Posterior cingulate gyrus (tissue), 11 donors: ENCODE measurements at regions of chr18 and their contacts with region 1.

Region 1: DNA sequence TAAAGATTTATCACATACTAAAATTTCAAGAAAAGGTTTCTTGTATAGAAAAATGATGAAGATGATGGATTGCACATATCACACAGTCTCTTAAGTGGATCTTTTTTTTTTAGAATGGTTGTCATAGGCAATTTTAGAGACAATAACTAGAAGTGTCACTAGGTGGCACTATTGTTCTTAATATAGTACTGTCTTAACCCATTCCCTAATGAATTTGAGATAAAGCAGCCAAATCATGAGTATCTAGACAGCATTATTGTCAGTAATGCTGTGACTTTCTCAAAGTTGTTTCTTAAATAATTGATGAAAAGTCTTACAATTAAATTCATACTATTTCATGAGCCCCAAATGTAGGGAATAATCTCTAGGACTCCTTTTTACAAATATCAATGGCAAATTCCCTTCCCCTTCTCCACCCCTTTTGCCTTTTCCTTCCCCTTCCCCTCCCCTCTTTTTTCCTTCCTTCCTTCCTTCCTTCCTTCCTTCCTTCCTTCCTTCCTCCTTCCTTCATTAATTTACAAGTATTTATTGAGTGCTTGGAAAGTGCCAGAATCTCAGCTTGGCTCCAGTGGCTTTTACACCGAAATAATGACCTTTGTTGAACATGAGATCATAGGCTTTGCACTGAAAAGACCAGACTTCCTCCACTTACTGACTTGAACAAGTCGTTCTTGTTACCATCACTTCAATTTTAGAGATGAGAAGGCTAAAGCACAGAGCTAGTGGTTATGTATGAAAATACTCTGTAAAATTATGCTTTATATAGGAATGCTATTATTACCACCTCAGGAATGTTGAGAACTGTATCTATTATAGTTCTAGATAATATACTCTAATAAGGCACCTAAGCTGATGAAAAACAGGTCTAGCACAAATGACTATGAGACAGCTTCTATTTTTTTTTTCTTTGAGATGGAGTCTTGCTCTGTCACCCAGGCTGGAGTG is 19.8 kb downstream of the MYL12B start:
- DNase-seq: no peak

Region 2: DNA sequence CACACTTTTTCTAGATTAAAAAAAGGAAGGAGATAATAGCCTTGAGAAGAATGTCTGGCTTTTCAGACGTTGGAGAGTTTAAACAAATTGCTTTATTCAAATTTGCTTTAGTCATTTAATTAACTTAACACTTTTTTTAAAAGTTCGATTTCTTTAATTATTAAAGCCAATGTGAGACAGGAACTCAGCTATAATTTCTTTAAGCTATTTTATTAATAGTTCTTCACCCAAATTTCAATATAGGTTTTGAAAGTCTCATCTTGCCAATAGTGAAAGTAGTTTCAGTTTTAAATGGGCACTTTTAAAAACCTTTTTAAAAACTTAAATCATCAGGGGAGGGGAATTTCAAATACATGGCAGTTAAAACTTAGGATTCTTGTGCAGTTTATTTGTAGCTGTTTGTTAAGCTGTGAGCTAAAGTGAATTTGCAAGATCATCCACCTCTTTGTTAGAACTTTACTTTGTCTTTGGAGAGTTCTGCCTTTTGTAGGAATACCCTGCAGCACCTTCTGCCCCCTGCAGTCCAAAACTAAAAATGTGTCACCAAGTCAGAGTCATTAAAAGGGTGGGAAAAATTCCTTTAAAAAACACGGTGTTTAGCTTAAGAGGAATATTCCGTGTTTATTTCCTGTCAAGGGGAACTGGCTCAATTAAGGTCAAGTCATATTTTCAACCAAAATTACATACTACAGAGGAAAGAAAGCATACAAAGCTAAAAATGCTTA is 172.8 kb after region 1 on chr18:
- intact Hi-C with region 1: loop called (anchors 2 kb)
- DNase-seq: peak in 2 of 10 donors; percentile 39 to 41

Region 3: GRCh38 chr18:3585656-3586509 is 304.2 kb after region 1 on chr18:
- intact Hi-C with region 1: loop called (anchors 5 kb)
- DNase-seq: peak in 9 of 10 donors; percentile 36 to 95 (median 74)

Region 4: DNA sequence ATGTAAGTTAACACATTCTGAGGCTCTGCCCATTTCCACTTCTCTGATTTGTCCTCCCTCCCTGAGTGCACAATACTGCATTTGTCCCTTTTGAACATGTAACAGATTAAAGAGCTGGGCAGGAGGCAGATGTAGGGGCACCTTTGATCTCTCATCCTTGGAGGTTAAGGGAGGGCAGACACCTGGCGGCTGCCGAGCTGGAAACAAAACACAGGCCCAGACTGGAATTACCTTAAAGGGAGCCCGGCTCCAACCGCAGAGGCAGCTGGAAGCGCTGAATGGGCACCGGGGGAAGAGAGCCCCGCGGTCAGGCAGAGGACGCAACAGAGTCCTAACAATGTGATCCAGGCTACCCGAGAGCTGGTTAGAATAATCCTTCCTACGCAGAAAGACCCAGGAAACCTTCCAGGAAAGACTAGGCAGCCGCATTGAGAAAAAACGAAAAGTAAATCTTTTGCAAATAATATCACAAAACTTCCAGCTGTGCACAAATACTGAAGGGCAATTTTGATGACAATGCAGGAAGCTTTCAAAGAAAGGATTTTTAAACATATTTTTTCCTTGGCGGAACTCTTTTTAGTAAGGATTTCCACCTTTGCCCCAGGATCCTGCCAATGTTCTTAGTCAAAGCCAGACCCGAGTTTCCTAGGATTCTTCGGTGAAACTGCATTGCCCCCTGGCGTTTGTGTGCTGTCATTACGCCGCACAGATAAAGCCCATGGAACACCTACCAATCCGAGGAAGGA is 384.2 kb after region 1 on chr18:
- intact Hi-C with region 1: loop called (anchors 1 kb)
- DNase-seq: peak; percentile 69 to 96 (median 82)

Region 5: DNA sequence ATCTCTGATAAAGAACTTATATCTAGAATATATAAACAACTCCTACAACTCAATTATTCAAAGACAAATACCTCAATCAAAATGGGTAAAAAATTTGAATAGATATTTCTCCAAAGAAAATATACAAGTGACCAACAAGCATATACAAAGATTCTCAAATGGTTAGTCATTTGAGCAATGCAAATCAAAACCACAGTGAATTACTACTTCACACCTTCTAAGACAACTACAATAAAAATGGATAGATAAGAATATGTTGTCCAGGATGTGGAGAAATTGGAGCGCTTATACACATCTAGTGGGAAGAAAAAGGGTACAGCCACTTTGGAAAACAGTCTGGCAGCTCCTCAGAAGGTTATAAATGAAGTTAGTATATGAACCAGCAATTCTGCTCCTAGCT is 501.2 kb after region 1 on chr18:
- intact Hi-C with region 1: loop called (anchors 10 kb)
- DNase-seq: no peak

Region 6: DNA sequence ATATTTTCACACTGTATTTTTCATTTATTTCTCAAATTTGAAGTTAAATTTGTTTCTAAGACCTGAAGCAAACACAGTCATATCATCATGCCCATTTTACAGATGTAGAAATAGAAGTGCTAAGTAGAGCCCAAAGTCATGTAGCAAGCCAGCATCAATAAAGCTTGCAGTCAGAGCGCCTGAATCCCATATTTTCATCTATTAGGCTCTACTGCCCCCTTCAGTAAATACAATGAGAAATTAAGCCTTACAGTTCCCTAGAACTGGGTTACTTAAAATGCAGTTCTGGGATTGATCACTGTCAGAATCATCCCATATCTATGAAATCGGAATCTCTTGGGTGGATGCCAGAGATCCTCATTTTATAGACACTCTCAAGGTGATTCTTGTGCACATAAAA is 588.1 kb after region 1 on chr18:
- intact Hi-C with region 1: loop called (anchors 5 kb)
- DNase-seq: no peak

Region 7: DNA sequence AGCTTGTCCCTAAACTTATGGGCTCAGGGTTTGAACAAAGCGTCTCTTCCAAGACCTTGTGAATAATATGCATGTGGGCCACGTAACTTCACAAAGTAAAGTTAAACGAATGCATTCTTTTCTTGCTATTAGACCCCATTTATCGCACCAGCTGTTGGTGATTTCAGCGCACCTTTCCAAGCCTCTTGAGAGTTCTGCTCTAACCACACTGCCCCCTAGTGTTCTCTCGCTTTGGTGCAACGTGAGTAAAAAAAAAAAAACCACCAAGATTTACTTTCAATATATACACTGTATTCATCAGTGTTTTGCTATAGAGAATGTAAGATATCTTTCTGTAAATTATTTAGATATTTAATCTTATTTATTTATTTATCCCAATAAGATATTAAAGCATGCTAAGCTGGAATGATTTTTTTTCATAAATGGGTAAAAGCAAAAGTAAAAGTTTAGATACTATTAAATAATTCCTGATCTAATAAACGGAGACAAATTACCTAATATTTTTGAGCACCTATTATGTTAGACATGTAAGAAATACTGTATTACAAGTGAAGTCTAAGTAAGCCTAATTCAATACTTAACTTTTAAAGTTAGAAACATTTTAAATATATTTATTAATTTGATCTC is 713.9 kb after region 1 on chr18:
- intact Hi-C with region 1: loop called (anchors 5 kb)
- DNase-seq: peak in 6 of 10 donors; percentile 39 to 81 (median 49)